ENCODE measurements at regions of chrX and their contacts with region 1.

Region 1: GRCh38 chrX:5113128-5113527 is 1115.5 kb downstream of the NLGN4X start:
- DNase-seq: no peak
- H3K4me3 ChIP-seq: no peak overlapping the region
- H3K27ac ChIP-seq: no peak overlapping the region
- H3K4me1 ChIP-seq: no peaks in the 10 kb centered on the region
- H3K27me3 ChIP-seq: no peaks in the 10 kb centered on the region
- CTCF ChIP-seq: no peak
- EP300 ChIP-seq: no peak
- POLR2A ChIP-seq: no peak

Region 2: GRCh38 chrX:4547213-4547836 is 565.8 kb before region 1 on chrX:
- in situ Hi-C with region 1: no loop called
- intact Hi-C with region 1: loop called (anchors 10 kb)
- DNase-seq: peak; percentile 32
- H3K4me3 ChIP-seq: no peak overlapping the region
- H3K27ac ChIP-seq: no peak overlapping the region
- H3K4me1 ChIP-seq: no peaks in the 10 kb centered on the region
- H3K27me3 ChIP-seq: no peaks in the 10 kb centered on the region
- CTCF ChIP-seq: peak; percentile 57 to 89 (median 71)
- EP300 ChIP-seq: no peak
- POLR2A ChIP-seq: no peak

Region 3: GRCh38 chrX:5015451-5015850 is 97.7 kb before region 1 on chrX:
- in situ Hi-C with region 1: no loop called
- intact Hi-C with region 1: no loop called
- DNase-seq: no peak
- H3K4me3 ChIP-seq: no peak overlapping the region
- H3K27ac ChIP-seq: no peak overlapping the region
- H3K4me1 ChIP-seq: no peaks in the 10 kb centered on the region
- H3K27me3 ChIP-seq: no peaks in the 10 kb centered on the region
- CTCF ChIP-seq: no peak
- EP300 ChIP-seq: no peak
- POLR2A ChIP-seq: no peak

Measured in transverse colon (tissue), 4 donors.